ENCODE measurements at regions of chr6 and their contacts with region 1.

Region 1: GRCh38 chr6:24743265-24743943 is 24.4 kb upstream of the C6orf62 start:
- DNase-seq: peak; percentile 90
- H3K4me3 ChIP-seq: no peak overlapping the region; the same call in 1 of the 2 replicates
- H3K27ac ChIP-seq: peak overlapping the region; percentile 97
- H3K27me3 ChIP-seq: no peaks in the 10 kb centered on the region
- CTCF ChIP-seq: no peak

Region 2: DNA sequence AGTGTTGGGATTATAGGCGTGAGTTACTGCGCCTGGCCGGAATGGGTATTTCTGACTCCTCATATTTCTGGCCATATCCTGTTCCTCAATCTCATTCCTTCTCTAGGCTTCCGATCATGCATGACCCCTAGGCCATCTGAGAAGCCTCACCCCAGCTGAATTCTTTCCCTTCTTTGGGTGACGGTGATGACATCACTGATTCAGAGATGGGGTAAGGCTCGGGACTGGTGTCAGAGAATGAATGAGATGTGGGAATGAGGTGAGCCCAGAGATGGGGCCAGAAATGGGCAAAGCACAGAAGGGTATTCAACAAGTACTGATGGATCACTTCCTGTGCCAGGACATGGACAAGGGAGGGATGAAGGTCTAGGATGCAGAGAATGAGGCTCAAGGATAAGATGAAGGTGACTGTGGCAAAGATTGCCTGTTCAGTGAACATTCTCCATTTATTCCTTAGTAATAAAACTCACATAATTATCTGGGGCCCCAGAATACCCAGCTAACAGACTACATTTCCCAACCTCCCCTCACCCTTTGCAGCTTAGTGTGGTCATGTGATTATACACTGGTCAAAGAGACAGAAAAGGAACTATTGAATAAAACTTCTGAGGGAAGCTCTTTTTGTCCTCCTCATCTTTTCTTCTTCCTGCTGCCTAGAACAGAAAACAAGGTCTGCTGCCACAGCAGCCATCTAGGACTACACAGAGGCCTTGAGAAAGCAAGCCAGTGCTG is 137.0 kb before region 1 on chr6:
- CTCF ChIA-PET with region 1: interaction called, 11 read pairs
- POLR2A ChIA-PET with region 1: no interaction called
- DNase-seq: no peak
- H3K4me3 ChIP-seq: no peak overlapping the region
- H3K27ac ChIP-seq: no peak overlapping the region
- H3K27me3 ChIP-seq: no peaks in the 10 kb centered on the region
- CTCF ChIP-seq: no peak

Region 3: GRCh38 chr6:24720604-24721460 is 22.6 kb before region 1 on chr6:
- CTCF ChIA-PET with region 1: no interaction called
- POLR2A ChIA-PET with region 1: interaction called, 14 read pairs
- DNase-seq: peak; percentile 100
- H3K4me3 ChIP-seq: peak overlapping the region; percentile 89
- H3K27ac ChIP-seq: peak overlapping the region; percentile 99
- H3K27me3 ChIP-seq: no peaks in the 10 kb centered on the region
- CTCF ChIP-seq: no peak

Region 4: DNA sequence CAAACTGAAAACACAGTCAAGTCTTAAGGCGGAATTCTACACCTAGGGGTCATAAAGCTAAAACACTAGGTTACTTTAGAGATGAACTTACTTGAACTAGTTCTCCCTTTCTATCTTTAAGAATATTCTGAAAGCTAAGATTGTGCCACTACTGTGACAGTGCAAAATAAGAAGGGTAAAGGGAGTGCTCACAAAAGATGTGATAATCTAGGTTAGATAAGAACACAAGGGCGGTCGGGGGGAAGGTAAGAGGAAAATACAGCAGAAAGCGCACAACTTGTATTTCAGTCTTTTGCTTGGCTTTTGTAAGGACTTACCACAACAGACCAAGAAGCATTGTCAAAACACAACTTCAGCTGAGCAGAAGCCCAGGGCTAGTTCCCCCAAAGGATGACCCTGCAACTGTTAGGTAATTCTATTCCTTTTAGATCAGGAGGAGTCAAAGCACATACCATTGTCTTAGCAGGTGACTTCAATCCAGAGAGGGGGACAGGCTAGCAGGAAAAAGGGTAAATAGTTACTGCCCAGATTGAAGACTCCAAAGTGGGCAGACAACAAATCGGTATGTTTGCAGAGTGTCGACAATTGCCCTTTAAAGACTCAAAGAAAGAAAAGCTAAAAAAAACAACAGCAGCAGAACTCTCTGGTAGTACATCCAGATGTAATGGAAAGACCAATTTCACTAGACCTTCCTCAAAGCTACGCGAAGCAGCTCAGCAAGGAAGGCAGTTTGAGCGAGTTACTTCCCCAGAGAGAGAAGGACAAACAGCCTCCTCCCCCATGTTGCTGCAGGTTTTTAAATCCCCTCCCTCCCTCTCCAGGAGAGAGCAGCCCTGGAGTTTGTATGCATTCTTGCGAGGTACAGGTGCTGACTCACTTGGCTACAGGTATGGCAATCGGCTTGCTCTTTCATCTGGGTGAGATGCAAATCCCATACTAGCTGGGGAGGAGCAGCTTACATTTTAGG is 133.4 kb after region 1 on chr6:
- CTCF ChIA-PET with region 1: no interaction called
- POLR2A ChIA-PET with region 1: no interaction called
- DNase-seq: no peak
- H3K4me3 ChIP-seq: no peak overlapping the region
- H3K27ac ChIP-seq: no peak overlapping the region
- H3K27me3 ChIP-seq: no peaks in the 10 kb centered on the region
- CTCF ChIP-seq: no peak

Measured in AG04450 (cell line).